OCI-LY7 (cell line): ENCODE measurements at regions of chr6 and their contacts with region 1.

Region 1: DNA sequence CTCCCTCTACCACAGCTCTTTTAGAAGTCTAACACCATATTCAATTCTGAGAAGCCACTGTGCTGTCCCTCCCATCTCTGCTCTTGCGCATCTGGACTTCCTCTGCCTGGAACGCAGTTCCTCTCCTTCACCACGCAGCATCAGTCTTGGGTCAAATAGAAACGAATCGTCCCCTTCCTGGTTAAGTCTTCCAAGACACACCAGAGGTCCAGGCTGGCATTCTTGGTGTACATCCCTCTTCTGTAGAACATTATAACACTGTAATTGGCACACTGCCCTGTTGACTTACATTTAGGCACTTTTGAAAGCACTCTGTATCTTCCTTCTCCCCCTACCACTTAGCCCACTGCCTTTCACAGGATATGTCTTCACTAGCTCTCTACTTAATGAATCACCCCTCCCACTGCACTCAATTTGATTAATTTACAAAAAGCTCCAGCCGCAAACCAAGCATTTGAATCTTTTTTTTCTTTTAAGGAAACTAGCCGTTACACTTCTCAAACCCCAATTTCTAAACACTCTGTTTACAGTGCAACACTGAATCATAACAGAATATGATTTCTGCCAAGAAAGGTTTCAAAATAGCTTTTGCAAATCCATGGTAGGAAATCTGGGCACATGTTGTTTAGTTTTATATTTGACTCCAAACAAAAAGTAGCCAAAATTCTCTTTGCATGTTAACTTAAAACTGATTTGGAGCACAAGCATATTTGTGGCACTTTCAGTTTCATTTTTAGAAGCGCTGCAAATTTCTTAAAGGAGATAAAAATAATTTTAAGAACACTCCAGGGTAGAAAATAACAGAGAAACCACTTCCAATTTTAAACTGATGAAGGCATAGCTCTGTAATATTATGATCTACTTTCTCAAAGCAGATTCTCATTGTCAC is 140.7 kb upstream of the CARMIL1 start:
- DNase-seq: peak; percentile 75
- H3K4me3 ChIP-seq: peak overlapping the region; percentile 51
- H3K27ac ChIP-seq: peak overlapping the region; percentile 34
- H3K4me1 ChIP-seq: peaks cover 24% of the 10 kb centered on the region
- CTCF ChIP-seq: peak; percentile 37; the same call in 1 of the 2 replicates

Region 2: DNA sequence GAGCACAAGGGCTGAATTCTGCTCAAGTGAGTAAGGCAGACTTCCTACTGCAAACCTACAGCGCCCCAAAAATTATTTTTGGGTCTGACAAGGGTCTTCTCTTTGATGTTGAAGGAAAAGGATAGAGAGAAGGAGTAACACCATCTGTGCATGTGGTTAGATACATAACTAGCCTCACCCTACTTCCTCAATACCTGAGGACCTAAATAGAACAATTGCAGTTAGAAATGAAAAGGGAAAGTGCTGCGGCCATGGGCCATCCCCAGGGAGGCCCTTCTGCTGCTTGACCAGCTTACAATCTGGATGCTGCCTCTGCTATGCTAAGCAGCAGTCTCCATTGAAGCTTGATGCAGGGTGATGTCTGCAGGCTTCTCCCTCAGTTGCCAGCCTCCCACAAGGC is 276.5 kb before region 1 on chr6:
- CTCF ChIA-PET with region 1: no interaction called
- POLR2A ChIA-PET with region 1: no interaction called
- intact Hi-C with region 1: loop called (anchors 5 kb)
- DNase-seq: peak; percentile 88
- H3K4me3 ChIP-seq: peak overlapping the region; percentile 15
- H3K27ac ChIP-seq: peak overlapping the region; percentile 82
- H3K4me1 ChIP-seq: peaks cover 99% of the 10 kb centered on the region
- CTCF ChIP-seq: no peak